Natural killer cell (primary cell): ENCODE measurements at regions of chr17 and their contacts with region 1.

Region 1: GRCh38 chr17:73371285-73371684 is 59.5 kb upstream of the CDC42EP4 start:
- DNase-seq: no peak
- ATAC-seq: no peak
- H3K4me3 ChIP-seq: no peak overlapping the region
- H3K4me3 Mint-ChIP-seq: no peak overlapping the region
- H3K27ac ChIP-seq: no peak overlapping the region
- H3K27ac Mint-ChIP-seq: no peak overlapping the region
- H3K4me1 ChIP-seq: no peaks in the 10 kb centered on the region
- H3K4me1 Mint-ChIP-seq: no peaks in the 10 kb centered on the region
- H3K27me3 ChIP-seq: no peaks in the 10 kb centered on the region
- H3K27me3 Mint-ChIP-seq: peaks cover 0 to 11% of the 10 kb centered on the region in 2 donors
- CTCF ChIP-seq: no peak

Region 2: DNA sequence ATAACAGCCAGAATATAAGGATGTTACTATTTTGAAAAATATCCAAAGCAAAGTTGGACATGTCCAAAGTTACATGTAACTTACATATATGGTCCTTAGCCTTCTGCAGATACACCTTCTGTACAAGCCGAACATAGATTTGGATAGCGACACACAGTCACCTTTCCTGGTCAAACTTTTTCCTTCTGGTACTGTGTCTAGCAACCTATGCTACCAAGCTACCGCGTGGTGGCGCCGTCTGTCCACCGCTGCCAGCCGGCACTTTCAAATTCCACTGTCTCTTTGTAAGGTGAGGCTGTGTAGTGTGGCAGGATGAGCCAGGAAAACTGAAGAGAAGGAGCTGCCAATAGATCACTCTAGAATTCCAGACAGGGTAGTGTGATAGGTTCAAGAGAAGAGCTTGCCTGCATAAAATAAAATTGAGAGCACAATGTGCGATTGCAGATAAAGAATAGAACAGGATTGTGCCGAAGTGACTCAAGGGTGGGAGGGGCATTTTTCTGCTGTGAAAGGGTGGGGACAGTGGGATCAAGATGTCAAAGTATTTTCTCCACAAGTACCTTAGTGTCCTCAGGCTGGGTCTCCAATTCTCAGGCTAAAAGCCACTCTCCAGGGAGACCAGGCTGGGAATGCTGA is 645.7 kb before region 1 on chr17:
- intact Hi-C with region 1: loop called (anchors 1 kb)
- DNase-seq: peak in 1 of 2 donors; percentile 71
- ATAC-seq: peak in 2 of 3 donors; percentile 49 to 67
- H3K4me3 ChIP-seq: no peak overlapping the region
- H3K4me3 Mint-ChIP-seq: peak overlapping the region; percentile 55
- H3K27ac ChIP-seq: no peak overlapping the region
- H3K27ac Mint-ChIP-seq: peak overlapping the region; percentile 6 to 46
- H3K4me1 ChIP-seq: peaks cover 19% of the 10 kb centered on the region
- H3K4me1 Mint-ChIP-seq: peaks cover 16 to 31% of the 10 kb centered on the region in 2 donors
- H3K27me3 ChIP-seq: no peaks in the 10 kb centered on the region
- H3K27me3 Mint-ChIP-seq: no peaks in the 10 kb centered on the region
- CTCF ChIP-seq: peak; percentile 69

Region 3: DNA sequence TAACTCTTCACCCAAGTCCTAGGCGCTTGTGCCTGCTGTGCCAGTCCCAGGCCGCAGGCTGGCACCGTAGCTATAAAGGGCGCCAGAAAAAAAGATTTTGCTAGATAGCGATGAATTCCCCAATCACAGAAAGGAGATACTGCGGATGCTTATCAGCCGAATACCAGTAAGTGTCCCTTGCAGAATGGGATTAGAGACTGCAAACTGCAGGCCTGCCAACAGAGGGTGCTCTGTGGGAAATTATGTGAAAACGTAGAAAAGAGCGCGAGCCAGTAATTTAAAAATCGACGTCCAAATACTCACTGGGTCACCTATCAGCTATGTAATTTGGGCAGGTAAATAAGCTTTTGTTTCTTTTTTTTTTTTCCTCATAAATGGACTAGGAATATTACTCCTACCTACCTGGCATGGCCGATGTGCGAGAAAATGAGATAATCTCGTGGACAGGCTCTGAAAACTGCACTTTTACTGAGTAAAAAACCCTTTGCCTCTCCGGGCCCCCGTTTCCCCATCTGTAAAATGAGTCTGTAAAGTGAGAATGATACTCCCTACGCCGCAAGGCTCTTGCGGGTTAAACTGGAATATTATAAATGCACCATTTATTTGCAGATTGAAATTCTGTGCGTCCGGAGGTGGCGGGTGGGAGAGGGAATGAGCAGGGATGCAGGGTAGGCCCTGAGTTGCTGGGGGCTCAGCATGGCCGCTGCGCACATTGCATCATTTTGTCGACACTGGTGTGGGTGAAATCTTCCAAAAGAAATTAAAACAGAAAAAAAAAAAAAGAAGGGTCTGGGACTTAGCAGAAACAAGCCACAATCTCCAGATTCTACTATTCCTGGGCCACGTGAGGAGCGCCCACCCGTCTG is 179.6 kb before region 1 on chr17:
- intact Hi-C with region 1: loop called (anchors 2 kb)
- DNase-seq: peak; percentile 53 to 84
- ATAC-seq: peak; percentile 41 to 59 (median 43)
- H3K4me3 ChIP-seq: peak overlapping the region; percentile 95
- H3K4me3 Mint-ChIP-seq: peak overlapping the region; percentile 85
- H3K27ac ChIP-seq: peak overlapping the region; percentile 82
- H3K27ac Mint-ChIP-seq: peak overlapping the region; percentile 59 to 93
- H3K4me1 ChIP-seq: peaks cover 19% of the 10 kb centered on the region
- H3K4me1 Mint-ChIP-seq: peaks cover 13 to 16% of the 10 kb centered on the region in 2 donors
- H3K27me3 ChIP-seq: no peaks in the 10 kb centered on the region
- H3K27me3 Mint-ChIP-seq: no peaks in the 10 kb centered on the region
- CTCF ChIP-seq: peak; percentile 73

Region 4: DNA sequence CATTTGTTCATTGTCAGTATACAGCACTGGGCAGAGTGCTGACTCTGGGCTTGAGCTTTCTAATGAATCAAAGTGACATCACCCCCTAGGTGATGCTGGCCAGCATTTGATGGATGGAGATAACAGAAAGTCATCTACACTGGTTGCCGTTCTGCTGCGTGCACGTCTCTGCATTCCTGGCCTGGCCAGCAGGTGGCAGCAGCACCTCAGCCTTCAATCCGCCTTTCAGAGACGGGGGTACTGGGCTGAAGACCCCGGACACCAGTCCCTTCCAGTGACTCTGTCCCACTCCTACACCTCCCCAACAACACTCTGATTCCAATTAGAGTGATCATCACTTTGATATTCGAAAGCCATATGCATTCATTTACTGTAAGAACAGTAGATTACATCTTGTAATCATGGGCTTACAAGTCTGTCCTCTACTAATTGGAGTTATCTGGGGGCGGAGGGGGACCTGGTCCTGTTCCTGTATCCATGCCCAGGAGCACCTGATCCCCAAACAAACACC is 115.6 kb before region 1 on chr17:
- intact Hi-C with region 1: loop called (anchors 1 kb)
- DNase-seq: peak; percentile 54 to 76
- ATAC-seq: peak; percentile 65 to 77 (median 67)
- H3K4me3 ChIP-seq: no peak overlapping the region
- H3K4me3 Mint-ChIP-seq: no peak overlapping the region
- H3K27ac ChIP-seq: no peak overlapping the region
- H3K27ac Mint-ChIP-seq: no peak overlapping the region
- H3K4me1 ChIP-seq: no peaks in the 10 kb centered on the region
- H3K4me1 Mint-ChIP-seq: peaks cover 0 to 5% of the 10 kb centered on the region in 2 donors
- H3K27me3 ChIP-seq: no peaks in the 10 kb centered on the region
- H3K27me3 Mint-ChIP-seq: peaks cover 0 to 3% of the 10 kb centered on the region in 2 donors
- CTCF ChIP-seq: peak; percentile 99

Region 5: DNA sequence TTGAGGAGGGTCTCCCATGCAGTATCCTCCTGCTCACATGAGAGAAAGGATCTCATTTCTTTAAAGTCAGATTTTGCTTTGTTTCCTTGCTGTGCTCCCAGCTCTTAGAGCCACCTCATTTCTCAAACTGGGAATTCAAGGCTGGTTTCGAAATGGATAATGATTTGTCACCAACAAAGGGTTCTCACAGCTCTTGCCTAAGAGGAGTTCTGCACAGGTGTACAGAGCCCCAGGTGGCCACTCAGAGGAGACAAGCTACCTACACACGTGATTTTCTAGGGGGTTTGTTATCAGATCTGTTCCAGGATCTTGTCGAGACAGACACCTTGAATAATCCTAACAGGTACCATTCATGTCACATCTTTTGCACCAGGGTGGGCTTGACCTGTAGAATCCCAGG is 130.1 kb after region 1 on chr17:
- intact Hi-C with region 1: no loop called
- DNase-seq: no peak
- ATAC-seq: no peak
- H3K4me3 ChIP-seq: no peak overlapping the region
- H3K4me3 Mint-ChIP-seq: no peak overlapping the region
- H3K27ac ChIP-seq: no peak overlapping the region
- H3K27ac Mint-ChIP-seq: no peak overlapping the region
- H3K4me1 ChIP-seq: no peaks in the 10 kb centered on the region
- H3K4me1 Mint-ChIP-seq: no peaks in the 10 kb centered on the region
- H3K27me3 ChIP-seq: no peaks in the 10 kb centered on the region
- H3K27me3 Mint-ChIP-seq: peaks cover 7 to 16% of the 10 kb centered on the region in 2 donors
- CTCF ChIP-seq: no peak